Activated CD8-positive, alpha-beta T cell treated with anti-CD3 and anti-CD28 coated beads, Interleukin-2, amount 10 ng/mL, durations not matched to agents 7 days and 5 days (primary cell): ENCODE measurements at regions of chr17 and their contacts with region 1.

Region 1: GRCh38 chr17:39730095-39730921 is at the start of gene MIEN1:
- DNase-seq: peak; percentile 95
- ATAC-seq: peak; percentile 92
- H3K4me3 Mint-ChIP-seq: peak within 1 kb of the TSS; percentile 91
- H3K27ac Mint-ChIP-seq: peak within 1 kb of the TSS; percentile 88
- H3K4me1 Mint-ChIP-seq: peaks cover 17% of the 10 kb centered on the region
- H3K27me3 Mint-ChIP-seq: peaks cover 6% of the 10 kb centered on the region
- total RNA-seq, gene MIEN1: 44.0 to 44.6 TPM

Region 2: DNA sequence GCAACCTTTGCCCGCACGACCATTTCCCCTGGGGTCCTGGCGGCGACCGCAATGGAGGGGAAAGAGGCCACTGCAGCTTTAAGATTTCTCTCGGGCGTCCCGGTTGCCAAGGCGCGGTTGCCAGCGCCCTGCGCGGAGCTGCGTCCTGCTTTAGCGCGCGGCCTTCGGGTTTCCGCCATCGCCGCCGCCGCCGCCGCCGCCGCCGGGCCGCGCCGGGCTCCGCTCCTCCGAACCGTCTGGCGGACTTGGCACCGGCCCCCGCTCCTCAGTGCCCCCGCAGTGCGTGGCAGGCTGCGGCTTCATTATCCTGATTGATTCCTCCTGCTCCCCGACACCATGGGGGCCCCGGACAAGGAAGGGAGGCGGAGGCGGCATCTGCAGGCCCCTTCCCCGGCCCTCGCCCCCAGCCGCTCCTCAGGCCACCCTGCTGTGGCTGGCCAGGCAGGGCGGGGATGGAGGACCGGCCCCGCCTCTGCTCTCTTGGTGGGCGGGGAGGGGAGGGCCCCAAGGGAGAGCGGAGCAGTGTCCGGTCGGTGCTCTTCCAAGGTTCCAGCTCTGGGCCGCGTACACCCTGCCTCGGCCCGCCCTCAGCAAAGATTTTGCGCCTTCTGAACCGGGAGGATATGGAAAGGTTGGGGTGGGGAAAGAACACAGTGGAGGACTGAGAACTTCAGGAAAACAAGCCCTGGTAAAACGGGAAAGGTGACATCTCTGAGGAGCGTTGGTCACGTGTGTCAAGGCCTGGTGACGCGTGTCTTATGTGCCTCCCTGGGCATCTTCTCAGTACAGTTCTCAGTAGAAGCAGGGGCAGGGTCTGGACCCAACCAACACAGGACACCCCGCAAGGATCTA is 156.6 kb before region 1 on chr17:
- CTCF ChIA-PET with region 1: no interaction called
- POLR2A ChIA-PET with region 1: no interaction called
- DNase-seq: peak; percentile 58
- ATAC-seq: peak; percentile 85
- H3K4me3 Mint-ChIP-seq: peak overlapping the region; percentile 80
- H3K27ac Mint-ChIP-seq: peak overlapping the region; percentile 72
- H3K4me1 Mint-ChIP-seq: peaks cover 4% of the 10 kb centered on the region
- H3K27me3 Mint-ChIP-seq: peaks cover 15% of the 10 kb centered on the region

Region 3: GRCh38 chr17:39612291-39612894 is 117.9 kb before region 1 on chr17:
- CTCF ChIA-PET with region 1: no interaction called
- POLR2A ChIA-PET with region 1: no interaction called
- DNase-seq: no peak
- ATAC-seq: no peak
- H3K4me3 Mint-ChIP-seq: no peak overlapping the region
- H3K27ac Mint-ChIP-seq: no peak overlapping the region
- H3K4me1 Mint-ChIP-seq: peaks cover under 1% of the 10 kb centered on the region
- H3K27me3 Mint-ChIP-seq: peaks cover 49% of the 10 kb centered on the region

Region 4: DNA sequence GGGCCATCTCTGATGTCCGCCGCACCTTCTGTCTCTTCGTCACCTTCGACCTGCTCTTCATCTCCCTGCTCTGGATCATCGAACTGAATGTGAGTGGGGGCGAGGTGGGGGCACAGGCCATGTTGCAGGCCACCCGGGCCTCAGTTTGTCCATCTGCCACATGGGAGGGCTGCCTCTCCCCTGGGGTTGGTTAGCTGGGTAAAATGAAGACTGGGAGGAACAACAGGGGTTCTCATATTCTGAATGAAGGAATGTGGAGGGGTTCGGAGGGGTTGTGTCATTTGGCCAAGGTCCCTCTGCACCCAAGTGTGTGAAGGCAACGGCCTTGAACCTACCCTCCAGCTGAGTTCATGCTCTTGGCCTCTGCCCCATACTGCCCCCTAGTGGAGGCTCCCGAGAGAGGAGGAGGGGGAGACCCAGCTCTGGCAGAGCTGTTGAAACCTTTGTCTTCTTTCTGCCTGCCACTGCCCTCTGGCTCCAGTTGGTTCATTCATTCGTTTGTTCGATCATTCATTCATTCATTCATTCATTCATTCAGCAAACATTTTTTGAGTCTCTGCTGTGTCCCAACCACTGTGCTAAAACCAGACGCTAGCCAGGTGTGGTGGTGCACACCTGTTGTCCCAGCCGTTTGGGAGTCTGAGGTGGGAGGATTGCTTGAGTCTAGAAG is 76.5 kb before region 1 on chr17:
- CTCF ChIA-PET with region 1: interaction called, 14 read pairs
- POLR2A ChIA-PET with region 1: no interaction called
- DNase-seq: peak; percentile 88
- ATAC-seq: peak; percentile 85
- H3K4me3 Mint-ChIP-seq: no peak overlapping the region
- H3K27ac Mint-ChIP-seq: no peak overlapping the region
- H3K4me1 Mint-ChIP-seq: peaks cover 37% of the 10 kb centered on the region
- H3K27me3 Mint-ChIP-seq: no peaks in the 10 kb centered on the region

Region 5: GRCh38 chr17:39668199-39668966 is 61.9 kb before region 1 on chr17 and contains the start of gene PNMT:
- CTCF ChIA-PET with region 1: interaction called, 10 read pairs
- POLR2A ChIA-PET with region 1: interaction called, 3 read pairs
- DNase-seq: peak; percentile 78
- ATAC-seq: peak; percentile 83
- H3K4me3 Mint-ChIP-seq: peak within 1 kb of the TSS; percentile 26
- H3K27ac Mint-ChIP-seq: no peak within 1 kb of the TSS
- H3K4me1 Mint-ChIP-seq: peaks cover 11% of the 10 kb centered on the region
- H3K27me3 Mint-ChIP-seq: peaks cover 29% of the 10 kb centered on the region
- total RNA-seq, gene PNMT: not detected

Region 6: GRCh38 chr17:39676198-39676819 is 54.0 kb before region 1 on chr17:
- CTCF ChIA-PET with region 1: interaction called, 13 read pairs
- POLR2A ChIA-PET with region 1: interaction called, 14 read pairs
- DNase-seq: peak; percentile 80
- ATAC-seq: peak; percentile 76
- H3K4me3 Mint-ChIP-seq: no peak overlapping the region
- H3K27ac Mint-ChIP-seq: peak overlapping the region; percentile 87
- H3K4me1 Mint-ChIP-seq: peaks cover 63% of the 10 kb centered on the region
- H3K27me3 Mint-ChIP-seq: peaks cover 3% of the 10 kb centered on the region

Region 7: DNA sequence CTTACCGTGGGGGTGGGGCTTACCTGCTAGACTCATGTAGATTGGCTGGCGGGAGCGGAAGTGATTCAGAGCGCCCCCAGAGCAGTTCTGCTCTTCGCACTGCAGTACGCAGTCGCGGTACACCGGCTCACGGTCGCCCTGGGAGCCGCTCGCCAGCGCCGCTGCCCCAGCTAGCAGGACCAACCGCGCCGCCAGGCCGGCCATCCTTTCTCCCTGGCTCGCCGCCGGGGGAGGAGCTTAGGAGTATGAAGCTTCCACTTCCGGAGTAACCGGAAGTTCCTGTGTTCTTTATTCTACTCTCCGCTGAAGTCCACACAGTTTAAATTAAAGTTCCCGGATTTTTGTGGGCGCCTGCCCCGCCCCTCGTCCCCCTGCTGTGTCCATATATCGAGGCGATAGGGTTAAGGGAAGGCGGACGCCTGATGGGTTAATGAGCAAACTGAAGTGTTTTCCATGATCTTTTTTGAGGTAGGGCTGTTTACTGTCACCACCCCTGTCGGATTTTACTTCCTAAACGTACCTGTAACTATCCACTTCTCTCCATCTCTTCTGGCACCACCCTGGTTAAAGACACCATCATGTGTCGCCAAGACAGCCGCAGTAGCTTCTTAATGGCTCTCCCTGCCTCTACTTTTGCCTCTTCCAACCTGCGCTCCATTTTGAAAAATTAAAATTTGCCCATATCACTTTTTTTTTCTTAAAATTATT is 42.3 kb before region 1 on chr17 and contains the start of gene PGAP3:
- CTCF ChIA-PET with region 1: interaction called, 16 read pairs
- POLR2A ChIA-PET with region 1: interaction called, 15 read pairs
- DNase-seq: peak; percentile 89
- ATAC-seq: peak; percentile 93
- H3K4me3 Mint-ChIP-seq: peak within 1 kb of the TSS; percentile 98
- H3K27ac Mint-ChIP-seq: peak within 1 kb of the TSS; percentile 95
- H3K4me1 Mint-ChIP-seq: peaks cover 28% of the 10 kb centered on the region
- H3K27me3 Mint-ChIP-seq: no peaks in the 10 kb centered on the region
- total RNA-seq, gene PGAP3: 12.3 to 14.7 TPM

Region 8: DNA sequence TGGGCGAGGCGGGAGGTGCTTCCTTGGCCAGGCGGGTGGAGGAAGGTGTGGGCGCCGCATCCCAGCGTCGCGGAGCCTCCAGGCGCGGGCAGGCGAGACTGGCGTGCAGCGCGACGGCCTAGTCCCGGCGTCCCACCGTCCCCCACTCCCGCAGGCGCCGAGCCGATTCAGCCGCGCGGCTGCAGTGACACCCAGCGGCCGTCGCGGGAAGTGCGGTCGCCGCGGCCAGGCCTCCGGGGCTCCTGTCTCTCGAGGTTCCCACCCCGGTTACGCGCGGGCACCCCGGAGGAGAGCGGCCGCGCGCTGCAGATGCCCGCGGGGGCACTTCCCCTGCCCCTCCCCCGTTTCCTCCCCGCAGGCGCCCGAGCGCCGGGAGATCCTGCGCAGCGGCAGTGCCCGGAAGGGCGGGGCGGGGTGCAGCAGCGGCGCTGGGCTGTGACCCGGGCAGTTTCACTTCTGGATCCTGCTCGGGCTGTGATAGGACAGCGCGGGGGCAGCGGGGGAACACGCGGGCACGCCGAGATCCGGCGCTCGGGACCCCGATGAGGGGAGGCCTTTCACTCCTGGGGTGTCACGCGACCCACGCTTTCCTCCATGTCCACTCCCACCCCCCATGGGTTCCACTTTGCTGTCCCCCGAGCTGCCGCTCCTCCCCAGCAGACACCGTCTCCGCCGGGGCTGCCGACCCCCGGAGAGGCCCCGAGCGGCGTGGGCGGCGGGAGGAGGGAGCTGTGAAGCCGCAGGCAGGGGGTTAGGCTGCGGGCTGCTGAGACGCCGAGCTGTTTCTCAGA is 24.0 kb after region 1 on chr17:
- CTCF ChIA-PET with region 1: interaction called, 34 read pairs
- POLR2A ChIA-PET with region 1: interaction called, 18 read pairs
- DNase-seq: peak; percentile 97
- ATAC-seq: peak; percentile 85
- H3K4me3 Mint-ChIP-seq: peak overlapping the region; percentile 79
- H3K27ac Mint-ChIP-seq: peak overlapping the region; percentile 83
- H3K4me1 Mint-ChIP-seq: peaks cover 63% of the 10 kb centered on the region
- H3K27me3 Mint-ChIP-seq: no peaks in the 10 kb centered on the region

Region 9: GRCh38 chr17:39863918-39864746 is 133.8 kb after region 1 on chr17 and contains the start of gene IKZF3:
- CTCF ChIA-PET with region 1: interaction called, 4 read pairs
- POLR2A ChIA-PET with region 1: interaction called, 11 read pairs
- DNase-seq: peak; percentile 75
- ATAC-seq: peak; percentile 74
- H3K4me3 Mint-ChIP-seq: peak within 1 kb of the TSS; percentile 84
- H3K27ac Mint-ChIP-seq: peak within 1 kb of the TSS; percentile 89
- H3K4me1 Mint-ChIP-seq: peaks cover 60% of the 10 kb centered on the region
- H3K27me3 Mint-ChIP-seq: no peaks in the 10 kb centered on the region
- total RNA-seq, gene IKZF3: 31.1 to 31.9 TPM